Caco-2 (cell line): ENCODE measurements at regions of chr22 and their contacts with region 1.

Region 1: DNA sequence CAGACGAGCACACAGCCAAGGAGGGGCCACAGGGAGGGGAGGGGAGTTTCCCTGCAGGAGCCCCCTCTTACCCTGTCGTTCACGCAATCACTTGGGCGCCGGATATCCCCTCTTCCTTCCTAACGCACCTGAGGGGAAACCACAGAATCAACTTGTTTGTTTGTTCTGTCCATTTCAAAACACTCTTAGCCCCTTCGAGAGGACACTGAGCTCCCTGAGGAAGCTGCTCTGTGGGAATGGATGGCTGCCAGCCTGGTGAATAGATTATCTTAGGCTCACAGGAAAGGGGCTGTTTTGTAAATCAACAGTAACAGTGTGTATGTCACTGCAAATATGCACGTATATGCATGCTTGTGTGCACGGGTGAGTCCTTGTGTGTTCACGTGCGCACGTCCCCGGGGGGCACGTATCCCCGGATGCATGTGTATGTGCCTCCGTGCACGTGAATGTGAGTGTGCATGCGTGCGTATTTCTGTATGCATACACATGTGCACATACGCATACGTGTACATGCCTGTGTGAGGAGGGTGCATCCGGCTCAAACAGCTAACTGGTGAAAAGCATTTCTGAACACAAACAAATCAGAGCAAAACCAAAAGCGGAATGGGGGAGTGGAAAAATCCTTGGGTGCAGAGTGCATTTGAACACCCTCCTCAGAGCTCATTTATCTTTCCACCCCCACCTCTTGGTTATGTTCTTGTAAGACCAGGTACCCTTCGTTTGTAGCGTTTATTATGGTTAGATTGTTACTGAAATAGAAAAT is 7.2 kb downstream of the ARSA start:
- DNase-seq: peak in 1 of 2 experiments; percentile 81
- H3K4me3 ChIP-seq: peak overlapping the region; percentile 39
- H3K4me3 Mint-ChIP-seq: peak overlapping the region; percentile 82
- H3K27ac Mint-ChIP-seq: no peak overlapping the region
- H3K4me1 ChIP-seq: peaks cover 18% of the 10 kb centered on the region
- H3K4me1 Mint-ChIP-seq: peaks cover 13% of the 10 kb centered on the region
- H3K27me3 ChIP-seq: no peaks in the 10 kb centered on the region
- H3K27me3 Mint-ChIP-seq: no peaks in the 10 kb centered on the region
- CTCF ChIP-seq: peak; percentile 63 to 86

Region 2: DNA sequence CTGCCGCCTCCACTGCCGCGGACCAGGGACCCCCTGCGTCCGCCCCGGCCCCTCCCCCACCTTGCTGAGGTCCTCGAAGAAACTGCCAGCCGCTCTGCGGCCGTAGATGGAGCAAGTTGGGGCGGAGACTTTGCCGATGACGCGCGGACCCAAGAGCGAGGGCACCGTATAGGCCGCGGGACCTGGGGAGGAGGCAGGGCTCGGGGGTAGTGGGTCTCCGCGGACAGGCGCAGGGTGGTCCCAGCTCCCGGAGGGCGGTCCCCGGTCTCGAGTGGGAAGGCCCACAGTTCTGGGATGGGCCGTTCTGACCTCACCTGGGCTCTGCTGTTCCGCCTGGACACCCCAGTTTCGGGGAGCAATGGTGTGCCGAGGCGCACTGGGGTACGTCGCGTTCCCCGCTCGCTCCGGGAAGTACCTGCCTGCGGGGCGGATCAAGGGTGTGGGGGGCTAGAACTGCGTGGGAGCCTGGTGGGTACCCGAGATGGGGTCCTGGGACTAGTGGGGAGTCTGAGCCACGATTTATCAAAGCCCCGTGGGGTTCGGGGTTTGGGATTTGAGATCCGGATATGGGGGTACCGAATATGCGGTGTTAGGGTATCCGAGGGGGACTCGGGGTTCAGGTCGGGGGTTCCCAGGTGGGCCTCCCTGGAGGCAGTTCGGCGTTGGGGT is 89.8 kb before region 1 on chr22:
- CTCF ChIA-PET with region 1: interaction called, 23 read pairs
- POLR2A ChIA-PET with region 1: no interaction called
- intact Hi-C with region 1: loop called (anchors 5 kb)
- DNase-seq: peak; percentile 80 to 82
- H3K4me3 ChIP-seq: peak overlapping the region; percentile 68
- H3K4me3 Mint-ChIP-seq: peak overlapping the region; percentile 81
- H3K27ac Mint-ChIP-seq: peak overlapping the region; percentile 86
- H3K4me1 ChIP-seq: peaks cover 37% of the 10 kb centered on the region
- H3K4me1 Mint-ChIP-seq: peaks cover 31% of the 10 kb centered on the region
- H3K27me3 ChIP-seq: no peaks in the 10 kb centered on the region
- H3K27me3 Mint-ChIP-seq: no peaks in the 10 kb centered on the region
- CTCF ChIP-seq: no peak

Region 3: GRCh38 chr22:50576070-50576469 is 44.7 kb before region 1 on chr22:
- CTCF ChIA-PET with region 1: interaction called, 14 read pairs
- POLR2A ChIA-PET with region 1: no interaction called
- intact Hi-C with region 1: loop called (anchors 1 kb)
- DNase-seq: peak; percentile 67 to 73
- H3K4me3 ChIP-seq: no peak overlapping the region
- H3K4me3 Mint-ChIP-seq: no peak overlapping the region
- H3K27ac Mint-ChIP-seq: no peak overlapping the region
- H3K4me1 ChIP-seq: no peaks in the 10 kb centered on the region
- H3K4me1 Mint-ChIP-seq: no peaks in the 10 kb centered on the region
- H3K27me3 ChIP-seq: no peaks in the 10 kb centered on the region
- H3K27me3 Mint-ChIP-seq: no peaks in the 10 kb centered on the region
- CTCF ChIP-seq: peak; percentile 41 to 59

Region 4: DNA sequence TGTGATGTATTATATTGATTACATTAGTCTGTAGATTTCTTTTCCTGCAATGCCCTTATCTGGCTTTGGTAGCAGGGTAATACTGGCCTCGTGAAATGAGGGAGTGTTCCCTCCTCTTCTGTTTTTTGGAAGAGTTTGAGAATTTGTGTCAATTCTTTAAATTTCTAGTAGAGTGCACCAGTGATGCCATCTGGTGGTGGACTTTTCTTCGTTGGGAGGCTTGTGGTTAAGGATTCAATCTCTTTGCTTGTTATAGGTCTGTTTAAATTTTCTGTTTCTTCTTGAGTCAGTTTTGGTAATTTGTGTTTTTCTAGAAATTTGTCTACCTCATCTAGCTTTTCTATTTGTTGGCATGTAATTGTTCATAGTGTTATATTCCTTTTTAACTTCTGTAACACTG is 70.7 kb after region 1 on chr22:
- CTCF ChIA-PET with region 1: no interaction called
- POLR2A ChIA-PET with region 1: no interaction called
- intact Hi-C with region 1: loop called (anchors 2 kb)
- DNase-seq: peak; percentile 34 to 49
- H3K4me3 ChIP-seq: no peak overlapping the region
- H3K4me3 Mint-ChIP-seq: no peak overlapping the region
- H3K27ac Mint-ChIP-seq: no peak overlapping the region
- H3K4me1 ChIP-seq: no peaks in the 10 kb centered on the region
- H3K4me1 Mint-ChIP-seq: no peaks in the 10 kb centered on the region
- H3K27me3 ChIP-seq: no peaks in the 10 kb centered on the region
- H3K27me3 Mint-ChIP-seq: no peaks in the 10 kb centered on the region
- CTCF ChIP-seq: peak; percentile 51 to 76

Region 5: GRCh38 chr22:50726643-50727340 is 106.0 kb after region 1 on chr22:
- CTCF ChIA-PET with region 1: no interaction called
- POLR2A ChIA-PET with region 1: no interaction called
- intact Hi-C with region 1: no loop called
- DNase-seq: no peak
- H3K4me3 ChIP-seq: no peak overlapping the region
- H3K4me3 Mint-ChIP-seq: no peak overlapping the region
- H3K27ac Mint-ChIP-seq: no peak overlapping the region
- H3K4me1 ChIP-seq: no peaks in the 10 kb centered on the region
- H3K4me1 Mint-ChIP-seq: no peaks in the 10 kb centered on the region
- H3K27me3 ChIP-seq: no peaks in the 10 kb centered on the region
- H3K27me3 Mint-ChIP-seq: no peaks in the 10 kb centered on the region
- CTCF ChIP-seq: peak in 1 of 2 experiments; percentile 7